WTC11 (cell line): ENCODE measurements at regions of chr7 and their contacts with region 1.

Region 1: DNA sequence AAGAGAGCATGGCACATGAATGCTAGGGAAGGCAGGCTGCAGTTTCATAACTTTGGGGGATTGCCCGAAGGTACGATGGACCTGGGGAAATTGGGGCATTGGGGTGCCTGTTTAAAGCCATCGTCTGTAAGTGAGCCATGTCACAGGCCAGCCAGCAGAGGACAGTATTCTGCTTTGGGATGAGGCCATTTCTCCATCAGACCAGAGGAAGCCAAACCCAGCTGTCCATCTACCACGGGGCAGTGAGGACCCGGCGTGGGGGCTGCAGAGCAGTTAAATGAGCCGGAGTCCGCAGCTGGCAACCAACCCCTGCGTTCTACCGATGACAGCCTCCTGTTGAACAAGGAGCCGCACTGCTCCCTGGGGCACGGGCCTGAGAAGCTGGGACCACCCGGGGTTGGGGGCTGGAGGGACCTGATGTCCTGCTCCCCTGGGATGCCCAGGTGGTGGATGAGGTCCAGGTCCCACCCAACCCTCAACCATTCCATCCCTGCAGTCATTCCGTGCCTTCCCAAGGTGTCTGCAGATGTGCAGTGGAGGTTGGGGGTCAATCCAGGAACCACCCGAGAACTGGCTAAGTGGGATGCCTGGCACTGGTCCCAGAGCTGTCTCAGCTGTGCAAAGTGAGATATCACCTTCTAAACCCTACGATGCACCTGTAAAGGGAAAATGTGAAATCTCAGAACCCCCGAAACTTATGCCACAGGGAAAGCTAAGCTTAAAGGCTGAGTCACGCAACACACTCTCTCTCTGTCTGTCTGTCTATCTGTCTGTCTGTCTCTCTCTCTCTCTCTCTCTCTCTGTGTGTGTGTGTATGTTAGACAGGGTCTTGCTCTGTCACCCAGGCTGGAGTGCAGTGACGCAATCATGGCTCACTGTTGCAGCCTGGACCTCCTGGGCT is 12.1 kb upstream of the RHBDD2 start:
- DNase-seq: peak; percentile 73
- ATAC-seq: peak; percentile 99
- H3K4me3 Mint-ChIP-seq: no peak overlapping the region
- H3K27ac Mint-ChIP-seq: no peak overlapping the region; the same call in 1 of the 2 replicates
- H3K4me1 Mint-ChIP-seq: no peaks in the 10 kb centered on the region
- H3K27me3 Mint-ChIP-seq: no peaks in the 10 kb centered on the region
- CTCF ChIP-seq: peak; percentile 53

Region 2: GRCh38 chr7:75667938-75668337 is 198.8 kb before region 1 on chr7:
- CTCF ChIA-PET with region 1: no interaction called
- POLR2A ChIA-PET with region 1: no interaction called
- DNase-seq: no peak
- ATAC-seq: no peak
- H3K4me3 Mint-ChIP-seq: no peak overlapping the region
- H3K27ac Mint-ChIP-seq: no peak overlapping the region
- H3K4me1 Mint-ChIP-seq: no peaks in the 10 kb centered on the region
- H3K27me3 Mint-ChIP-seq: no peaks in the 10 kb centered on the region
- CTCF ChIP-seq: no peak

Region 3: GRCh38 chr7:75878769-75879611 is 12.3 kb after region 1 on chr7 and contains the start of gene RHBDD2:
- CTCF ChIA-PET with region 1: interaction called, 12 read pairs
- POLR2A ChIA-PET with region 1: no interaction called
- DNase-seq: peak; percentile 97
- ATAC-seq: peak; percentile 90
- H3K4me3 Mint-ChIP-seq: peak within 1 kb of the TSS; percentile 90
- H3K27ac Mint-ChIP-seq: peak within 1 kb of the TSS; percentile 90
- H3K4me1 Mint-ChIP-seq: peaks cover 34% of the 10 kb centered on the region
- H3K27me3 Mint-ChIP-seq: no peaks in the 10 kb centered on the region
- CTCF ChIP-seq: no peak
- total RNA-seq, gene RHBDD2: 31.4 to 35.5 TPM (median 34.3 TPM) in 3 replicates

Region 4: DNA sequence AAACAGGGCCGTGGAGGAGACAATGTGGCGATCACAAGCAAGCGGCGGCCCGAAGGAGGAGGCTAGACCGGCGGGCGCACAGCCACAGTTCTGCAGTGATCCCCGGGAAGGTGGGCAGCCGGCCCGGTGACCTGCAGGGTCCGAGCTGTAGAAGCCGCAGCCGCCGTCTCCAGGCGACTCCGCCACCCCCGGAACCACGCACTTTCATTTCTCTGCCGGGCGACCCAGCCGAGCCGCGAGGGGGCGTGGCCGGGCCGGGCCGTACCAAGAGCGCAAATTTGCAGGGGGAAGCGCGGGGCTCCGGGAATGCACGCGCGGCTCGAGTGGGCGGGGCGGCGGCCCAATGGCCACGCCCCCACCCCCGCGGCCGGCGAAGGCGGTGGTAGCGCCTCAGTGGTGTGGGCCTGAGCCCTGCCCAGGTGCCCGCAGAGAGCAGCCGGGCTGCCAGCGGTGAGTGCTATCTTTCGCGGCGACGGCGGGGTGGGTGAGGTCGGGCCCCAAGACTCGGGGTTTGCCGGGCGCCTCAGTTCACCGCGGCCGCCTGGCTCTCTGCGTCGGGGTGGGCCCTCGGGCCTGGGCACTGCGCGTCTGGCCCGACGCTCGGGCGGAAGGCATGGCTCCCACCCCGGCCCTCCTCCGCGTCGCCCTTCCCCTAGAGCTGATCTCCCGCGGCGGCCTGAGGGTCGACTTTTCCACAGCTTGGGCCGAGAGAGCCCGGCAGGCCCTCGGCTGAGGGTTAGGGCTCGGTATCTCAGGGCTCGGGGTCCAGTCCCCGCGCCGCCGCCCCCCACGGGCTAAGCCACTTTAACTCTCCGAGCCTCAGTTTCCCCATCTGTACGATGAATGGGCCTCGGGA is 48.2 kb after region 1 on chr7 and contains the start of gene POR:
- CTCF ChIA-PET with region 1: interaction called, 16 read pairs
- POLR2A ChIA-PET with region 1: interaction called, 3 read pairs
- DNase-seq: peak; percentile 95
- ATAC-seq: peak; percentile 85
- H3K4me3 Mint-ChIP-seq: peak within 1 kb of the TSS; percentile 87
- H3K27ac Mint-ChIP-seq: peak within 1 kb of the TSS; percentile 91
- H3K4me1 Mint-ChIP-seq: peaks cover 36% of the 10 kb centered on the region
- H3K27me3 Mint-ChIP-seq: no peaks in the 10 kb centered on the region
- CTCF ChIP-seq: no peak
- total RNA-seq, gene POR: 151 to 178 TPM (median 169 TPM) in 3 replicates

Region 5: DNA sequence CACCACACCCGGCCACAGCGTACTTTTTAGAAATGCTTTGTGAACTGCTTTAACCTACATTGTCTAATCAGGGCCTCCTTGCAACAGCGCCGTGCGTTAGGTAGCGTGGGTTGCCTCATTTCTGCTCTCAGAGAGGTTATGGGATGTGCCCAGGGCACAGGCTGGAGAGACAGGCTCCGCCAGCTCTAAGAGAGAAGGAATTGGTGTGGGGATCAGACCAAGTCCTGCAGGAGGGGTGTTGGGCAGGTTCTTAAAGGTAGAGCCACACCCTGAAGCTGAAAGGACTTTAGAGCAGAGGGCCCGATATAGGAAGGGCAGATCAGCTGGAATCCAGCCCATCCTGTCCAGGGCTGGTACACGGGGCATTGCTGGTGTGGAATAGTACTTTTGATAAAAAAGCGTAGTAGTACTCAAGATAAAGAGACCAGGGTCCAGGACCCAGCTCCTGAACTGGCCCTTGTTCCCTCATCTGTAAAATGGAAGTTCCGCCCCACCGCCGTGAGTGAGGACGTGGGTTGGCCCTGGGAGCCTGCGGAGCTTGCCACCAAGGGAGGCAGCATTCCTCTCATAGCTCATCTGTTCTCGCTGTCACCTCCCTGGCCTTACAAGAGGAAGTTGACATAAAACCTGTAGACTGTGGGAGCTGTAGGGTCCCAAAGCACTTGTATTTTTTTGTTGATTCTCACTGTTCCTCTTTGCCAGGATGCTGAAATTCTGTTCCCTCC is 90.4 kb after region 1 on chr7:
- CTCF ChIA-PET with region 1: interaction called, 18 read pairs
- POLR2A ChIA-PET with region 1: no interaction called
- DNase-seq: peak; percentile 63
- ATAC-seq: peak; percentile 83
- H3K4me3 Mint-ChIP-seq: no peak overlapping the region
- H3K27ac Mint-ChIP-seq: peak overlapping the region; percentile 14
- H3K4me1 Mint-ChIP-seq: peaks cover 22% of the 10 kb centered on the region
- H3K27me3 Mint-ChIP-seq: no peaks in the 10 kb centered on the region
- CTCF ChIP-seq: no peak